ENCODE measurements at regions of chr4 and their contacts with region 1.

Region 1: GRCh38 chr4:182853731-182854360 is 63.3 kb downstream of the DCTD start:
- DNase-seq: no peak
- H3K4me3 ChIP-seq: no peak overlapping the region
- H3K27ac ChIP-seq: no peak overlapping the region
- H3K4me1 ChIP-seq: no peaks in the 10 kb centered on the region
- H3K27me3 ChIP-seq: no peaks in the 10 kb centered on the region
- CTCF ChIP-seq: no peak
- POLR2A ChIP-seq: no peak

Region 2: GRCh38 chr4:182277377-182277776 is 576.5 kb before region 1 on chr4:
- intact Hi-C with region 1: loop called (anchors 5 kb)
- DNase-seq: no peak
- H3K4me3 ChIP-seq: no peak overlapping the region
- H3K27ac ChIP-seq: no peak overlapping the region
- H3K4me1 ChIP-seq: no peaks in the 10 kb centered on the region
- H3K27me3 ChIP-seq: no peaks in the 10 kb centered on the region
- CTCF ChIP-seq: no peak
- POLR2A ChIP-seq: no peak

Region 3: GRCh38 chr4:182874304-182874751 is 20.5 kb after region 1 on chr4:
- intact Hi-C with region 1: no loop called
- DNase-seq: no peak
- H3K4me3 ChIP-seq: no peak overlapping the region
- H3K27ac ChIP-seq: no peak overlapping the region
- H3K4me1 ChIP-seq: no peaks in the 10 kb centered on the region
- H3K27me3 ChIP-seq: no peaks in the 10 kb centered on the region
- CTCF ChIP-seq: no peak
- POLR2A ChIP-seq: no peak

Measured in breast epithelium (tissue), 4 donors.